Left cardiac atrium (tissue), 4 donors: ENCODE measurements at regions of chr4 and their contacts with region 1.

Region 1: DNA sequence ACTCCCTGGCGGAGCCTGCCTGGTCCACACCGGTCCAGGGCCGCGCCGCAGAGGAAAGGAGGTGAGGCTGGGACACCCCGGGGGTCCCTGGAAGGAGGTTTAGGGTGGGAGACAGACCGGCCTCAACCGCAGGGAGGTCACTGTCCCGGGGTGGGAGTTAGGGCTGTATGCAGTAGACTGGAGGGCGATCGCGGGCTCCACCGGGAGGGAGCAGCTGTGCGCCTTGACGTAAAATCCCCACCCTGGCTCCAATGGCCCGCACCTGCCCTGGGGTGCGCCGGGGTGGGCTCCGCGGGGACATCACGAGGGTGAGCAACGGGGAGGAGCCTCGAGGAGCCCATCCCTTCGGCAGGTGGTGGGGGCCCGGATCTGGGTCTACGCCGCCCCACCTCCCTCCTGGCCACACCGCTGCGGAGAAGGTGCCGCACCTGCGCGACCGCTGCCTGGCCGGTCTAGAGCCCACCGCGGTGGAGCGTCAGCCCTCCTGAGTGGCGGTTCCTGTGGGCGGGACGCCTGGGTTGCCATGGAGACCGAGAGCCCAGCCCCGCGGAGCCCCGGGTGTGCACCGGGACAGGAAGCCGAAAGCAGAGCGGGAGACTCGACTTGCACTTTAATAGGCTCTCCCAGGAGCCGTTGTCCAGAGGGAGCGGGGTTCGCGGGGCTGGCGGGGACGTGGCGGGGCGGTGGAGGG is 105.1 kb downstream of the ADRA2C start:
- DNase-seq: no peak
- ATAC-seq: no peak

Region 2: GRCh38 chr4:3765271-3766040 is 105.9 kb before region 1 on chr4:
- intact Hi-C with region 1: loop called in 1 of 2 experiments (anchors 10 kb)
- DNase-seq: peak; percentile 28
- ATAC-seq: peak; percentile 55 to 63